ENCODE measurements at regions of chr12 and their contacts with region 1.

Region 1: DNA sequence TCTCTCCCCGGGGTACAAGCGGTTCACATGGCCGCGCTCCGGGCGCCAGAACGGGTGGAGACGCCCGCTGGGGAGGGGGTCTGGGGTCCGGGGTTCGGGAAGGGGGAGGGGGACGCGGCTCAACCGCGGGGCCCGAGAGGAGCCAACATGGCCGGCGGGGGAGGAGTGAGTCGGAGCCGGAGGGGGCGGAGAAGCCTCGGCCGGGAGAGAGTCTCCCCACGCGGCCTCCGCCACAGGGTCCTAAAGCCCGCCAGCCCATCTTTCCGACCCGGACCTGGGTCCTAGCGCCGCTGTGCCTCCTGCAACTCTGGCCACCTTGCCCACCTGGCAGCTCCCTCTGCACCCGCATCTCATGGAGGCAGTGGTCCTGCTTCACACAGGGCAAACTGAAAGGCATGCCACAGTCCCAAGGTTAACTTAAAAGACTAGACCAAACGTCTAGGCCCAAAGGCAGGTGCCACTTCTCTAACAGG is at the start of gene BAZ2A:
- DNase-seq: peak; percentile 91 to 99 (median 97)

Region 2: DNA sequence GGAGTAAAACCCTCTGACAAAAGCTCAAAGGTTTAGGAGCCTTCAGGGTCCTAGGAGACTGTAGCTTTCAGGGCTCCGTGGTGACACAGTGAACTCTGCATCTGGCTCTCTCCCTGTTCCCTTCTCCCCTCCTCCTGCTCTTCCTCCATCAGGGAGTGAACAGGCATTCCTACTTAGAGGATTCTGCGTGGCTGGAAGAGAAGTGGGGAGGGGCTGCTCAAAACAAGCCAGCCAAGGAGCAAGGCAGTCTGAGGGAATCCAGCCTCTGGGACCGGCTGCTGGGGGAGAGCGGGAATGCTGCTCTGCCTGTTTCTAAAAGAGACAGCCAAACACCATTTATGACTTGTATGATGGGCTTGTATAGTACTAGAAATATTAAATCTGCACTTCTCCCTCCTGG is 59.1 kb before region 1 on chr12:
- intact Hi-C with region 1: loop called (anchors 5 kb)
- DNase-seq: no peak

Region 3: DNA sequence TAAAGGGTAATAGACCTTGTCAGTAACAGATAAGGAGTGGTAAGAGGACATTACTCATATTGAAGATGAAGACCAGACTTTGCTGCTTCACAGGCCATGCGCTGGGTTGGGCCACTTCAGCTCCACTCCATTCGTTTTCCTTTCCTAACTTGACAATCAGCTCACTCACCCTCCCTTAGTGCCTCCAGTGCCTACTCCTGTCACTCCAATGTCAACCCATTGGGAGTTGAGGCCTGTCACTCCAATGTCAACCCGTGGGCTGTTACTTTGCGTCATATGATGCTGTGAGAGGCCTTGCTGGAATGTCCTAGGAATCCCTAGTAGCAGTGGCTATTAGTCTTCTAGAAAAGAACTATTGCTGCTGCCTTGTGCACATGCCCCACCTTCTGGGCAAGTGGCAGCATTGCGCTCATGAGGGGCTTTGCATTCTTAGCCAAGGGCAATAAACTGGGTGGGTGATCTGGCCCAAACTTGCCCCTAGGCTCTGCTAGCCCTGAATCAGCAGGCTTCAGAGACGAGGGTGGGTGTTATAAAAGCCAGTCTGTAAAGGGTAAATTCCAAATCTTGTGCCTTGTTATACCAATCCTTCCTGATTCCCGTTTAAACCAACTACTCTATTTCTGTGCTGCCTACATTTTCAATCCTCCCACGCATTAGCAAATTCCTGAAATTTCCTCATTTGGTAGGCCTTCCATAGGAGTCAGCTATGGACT is 36.1 kb before region 1 on chr12:
- intact Hi-C with region 1: loop called (anchors 5 kb)
- DNase-seq: peak in 9 of 10 donors; percentile 27 to 91 (median 46)

Region 4: DNA sequence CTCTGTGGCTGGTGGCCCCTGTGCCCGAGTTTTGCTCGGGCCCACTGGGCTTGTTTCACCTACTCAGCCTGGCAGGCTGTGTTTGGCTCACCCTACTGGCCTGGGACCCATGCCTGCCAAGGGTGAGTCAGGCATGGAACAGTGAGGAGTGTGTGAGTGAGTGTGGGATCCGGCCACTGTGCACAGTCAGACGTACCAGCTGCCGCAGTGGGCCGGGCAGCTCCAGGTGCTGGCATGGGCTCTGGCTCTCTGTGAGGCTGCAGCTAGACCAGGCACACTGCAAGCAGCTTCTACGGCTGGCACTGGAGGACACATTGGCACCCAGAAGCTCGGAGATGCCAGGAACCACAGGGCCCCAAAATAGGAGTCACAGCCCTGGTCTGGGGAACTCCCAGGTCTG is 173.6 kb after region 1 on chr12:
- intact Hi-C with region 1: no loop called
- DNase-seq: peak in 1 of 10 donors; percentile 76

Measured in posterior cingulate gyrus (tissue), 11 donors.